ENCODE measurements at regions of chr6 and their contacts with region 1.

Region 1: GRCh38 chr6:107318100-107318736 is 141.1 kb downstream of the PDSS2 start:
- DNase-seq: peak; percentile 61
- ATAC-seq: peak; percentile 80
- H3K4me3 ChIP-seq: no peak overlapping the region
- H3K4me3 Mint-ChIP-seq: no peak overlapping the region
- H3K27ac ChIP-seq: no peak overlapping the region
- H3K27ac Mint-ChIP-seq: no peak overlapping the region
- H3K4me1 ChIP-seq: peaks cover 9 to 10% of the 10 kb centered on the region in 2 donors
- H3K4me1 Mint-ChIP-seq: peaks cover 16% of the 10 kb centered on the region
- H3K27me3 ChIP-seq: no peaks in the 10 kb centered on the region
- H3K27me3 Mint-ChIP-seq: no peaks in the 10 kb centered on the region
- CTCF ChIP-seq: peak; percentile 53

Region 2: DNA sequence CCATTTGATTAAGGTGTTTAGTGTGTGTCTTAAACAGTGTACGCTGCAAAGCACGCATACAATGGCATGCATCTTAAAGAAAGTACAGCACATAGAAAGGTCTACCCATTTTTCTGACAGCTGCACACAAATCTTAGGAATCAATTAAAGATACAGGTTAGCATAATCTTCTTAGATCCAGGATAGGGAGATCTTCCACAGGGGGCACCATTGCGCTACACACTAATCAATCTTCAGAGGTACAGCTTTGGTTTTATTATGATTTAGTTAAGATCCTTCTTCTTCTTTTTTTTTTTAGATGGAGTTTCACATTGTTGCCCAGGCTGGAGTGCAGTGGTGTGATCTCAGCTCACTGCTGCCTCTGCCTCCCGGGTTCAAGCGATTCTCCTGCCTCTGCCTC is 139.2 kb before region 1 on chr6:
- CTCF ChIA-PET with region 1: no interaction called
- POLR2A ChIA-PET with region 1: no interaction called
- intact Hi-C with region 1: no loop called
- DNase-seq: no peak
- ATAC-seq: no peak
- H3K4me3 ChIP-seq: no peak overlapping the region
- H3K4me3 Mint-ChIP-seq: no peak overlapping the region
- H3K27ac ChIP-seq: no peak overlapping the region
- H3K27ac Mint-ChIP-seq: no peak overlapping the region
- H3K4me1 ChIP-seq: no peaks in the 10 kb centered on the region
- H3K4me1 Mint-ChIP-seq: no peaks in the 10 kb centered on the region
- H3K27me3 ChIP-seq: no peaks in the 10 kb centered on the region
- H3K27me3 Mint-ChIP-seq: no peaks in the 10 kb centered on the region
- CTCF ChIP-seq: no peak

Region 3: GRCh38 chr6:107259951-107260350 is 58.3 kb before region 1 on chr6:
- CTCF ChIA-PET with region 1: no interaction called
- POLR2A ChIA-PET with region 1: no interaction called
- intact Hi-C with region 1: no loop called
- DNase-seq: no peak
- ATAC-seq: no peak
- H3K4me3 ChIP-seq: no peak overlapping the region
- H3K4me3 Mint-ChIP-seq: no peak overlapping the region
- H3K27ac ChIP-seq: no peak overlapping the region
- H3K27ac Mint-ChIP-seq: no peak overlapping the region
- H3K4me1 ChIP-seq: no peaks in the 10 kb centered on the region
- H3K4me1 Mint-ChIP-seq: no peaks in the 10 kb centered on the region
- H3K27me3 ChIP-seq: no peaks in the 10 kb centered on the region
- H3K27me3 Mint-ChIP-seq: no peaks in the 10 kb centered on the region
- CTCF ChIP-seq: no peak

Region 4: DNA sequence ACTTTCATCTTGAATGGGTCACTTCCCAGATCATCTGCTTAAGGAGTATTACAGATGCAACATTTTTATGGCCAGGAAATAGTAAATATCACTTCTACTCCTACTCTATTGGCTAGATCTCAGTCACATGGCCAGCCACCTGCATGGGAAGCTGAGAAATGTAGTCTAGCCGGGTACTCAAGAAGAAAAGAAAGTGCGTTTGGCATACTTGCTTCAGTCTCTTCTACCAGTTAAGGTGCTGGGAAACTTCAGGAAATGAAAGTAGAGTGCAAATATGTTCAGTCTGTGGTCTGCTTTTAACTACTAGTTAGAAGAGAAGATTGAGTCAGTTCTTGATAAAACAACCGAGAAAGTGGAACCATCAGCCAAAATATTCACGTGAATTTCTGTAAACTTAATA is 11.9 kb after region 1 on chr6:
- CTCF ChIA-PET with region 1: interaction called, 39 read pairs
- POLR2A ChIA-PET with region 1: no interaction called
- intact Hi-C with region 1: no loop called
- DNase-seq: peak; percentile 73
- ATAC-seq: peak; percentile 78
- H3K4me3 ChIP-seq: peak overlapping the region in 1 of 5 experiments; percentile 25
- H3K4me3 Mint-ChIP-seq: peak overlapping the region; percentile 67
- H3K27ac ChIP-seq: peak overlapping the region; percentile 11 to 65
- H3K27ac Mint-ChIP-seq: peak overlapping the region; percentile 80
- H3K4me1 ChIP-seq: peaks cover 15 to 19% of the 10 kb centered on the region in 2 donors
- H3K4me1 Mint-ChIP-seq: peaks cover 20% of the 10 kb centered on the region
- H3K27me3 ChIP-seq: no peaks in the 10 kb centered on the region
- H3K27me3 Mint-ChIP-seq: no peaks in the 10 kb centered on the region
- CTCF ChIP-seq: no peak

Region 5: GRCh38 chr6:107369493-107369892 is 51.3 kb after region 1 on chr6:
- CTCF ChIA-PET with region 1: no interaction called
- POLR2A ChIA-PET with region 1: no interaction called
- intact Hi-C with region 1: no loop called
- DNase-seq: no peak
- ATAC-seq: no peak
- H3K4me3 ChIP-seq: no peak overlapping the region
- H3K4me3 Mint-ChIP-seq: no peak overlapping the region
- H3K27ac ChIP-seq: no peak overlapping the region
- H3K27ac Mint-ChIP-seq: no peak overlapping the region
- H3K4me1 ChIP-seq: no peaks in the 10 kb centered on the region
- H3K4me1 Mint-ChIP-seq: peaks cover 2% of the 10 kb centered on the region
- H3K27me3 ChIP-seq: no peaks in the 10 kb centered on the region
- H3K27me3 Mint-ChIP-seq: no peaks in the 10 kb centered on the region
- CTCF ChIP-seq: no peak

Region 6: GRCh38 chr6:107704347-107705013 is 386.3 kb after region 1 on chr6:
- CTCF ChIA-PET with region 1: interaction called, 21 read pairs
- POLR2A ChIA-PET with region 1: no interaction called
- intact Hi-C with region 1: no loop called
- DNase-seq: peak; percentile 67
- ATAC-seq: peak; percentile 53
- H3K4me3 ChIP-seq: no peak overlapping the region
- H3K4me3 Mint-ChIP-seq: no peak overlapping the region
- H3K27ac ChIP-seq: no peak overlapping the region
- H3K27ac Mint-ChIP-seq: no peak overlapping the region
- H3K4me1 ChIP-seq: peaks cover 0 to 5% of the 10 kb centered on the region in 2 donors
- H3K4me1 Mint-ChIP-seq: peaks cover 2% of the 10 kb centered on the region
- H3K27me3 ChIP-seq: no peaks in the 10 kb centered on the region
- H3K27me3 Mint-ChIP-seq: no peaks in the 10 kb centered on the region
- CTCF ChIP-seq: peak; percentile 85